ENCODE measurements at regions of chr1 and their contacts with region 1.

Region 1: DNA sequence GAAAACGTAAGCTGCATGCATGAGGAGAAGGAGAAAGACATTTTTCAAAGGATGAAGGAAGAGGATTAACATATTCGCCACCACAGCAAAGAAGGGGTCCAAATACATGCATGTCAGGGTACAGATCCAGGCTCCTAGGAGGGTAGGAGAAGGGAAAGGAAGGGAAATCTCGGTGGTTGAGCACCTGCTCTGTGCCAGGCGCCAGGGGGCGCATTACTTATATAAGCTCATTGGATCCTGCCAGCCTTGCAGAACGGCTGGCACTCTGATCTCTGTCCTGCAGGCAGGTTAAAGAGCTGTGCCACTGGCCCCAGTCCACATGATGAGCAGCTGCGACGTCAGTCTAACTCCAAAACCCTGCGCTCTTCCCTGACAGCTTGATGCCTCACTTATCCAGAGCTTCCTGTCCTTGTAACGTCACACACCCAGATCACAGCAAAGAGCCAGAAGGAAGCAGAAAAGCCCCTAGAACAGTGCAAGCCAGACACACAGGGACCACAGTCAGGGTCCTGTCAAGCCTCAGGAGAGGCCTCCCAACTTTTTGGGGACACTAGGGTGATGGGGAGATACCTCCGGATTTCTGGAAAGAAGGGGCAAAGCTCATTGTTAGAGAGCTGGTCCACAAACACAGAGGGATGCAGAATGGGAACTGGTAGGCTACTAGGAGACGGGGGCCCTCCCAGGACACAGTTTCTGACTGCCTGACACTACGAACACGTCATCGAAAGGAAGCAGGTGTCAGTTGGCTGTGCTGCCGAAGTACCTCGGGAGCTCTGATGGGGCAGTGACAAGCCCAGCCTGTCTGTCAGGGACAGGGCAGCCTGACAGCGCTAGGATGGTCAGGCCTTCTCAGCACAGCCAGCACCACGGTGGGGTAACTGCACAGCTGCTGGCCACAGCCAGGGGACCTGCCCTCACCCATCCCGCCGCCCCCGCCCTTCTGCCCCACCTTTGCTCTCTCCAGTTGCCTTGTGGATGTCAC is 99.1 kb downstream of the BEND5 start:
- DNase-seq: peak in 16 of 35 experiments; percentile 2 to 36 (median 12)
- ATAC-seq: no peak
- H3K4me3 ChIP-seq: no peak overlapping the region
- H3K4me3 Mint-ChIP-seq: no peak overlapping the region
- H3K27ac ChIP-seq: no peak overlapping the region
- H3K27ac Mint-ChIP-seq: no peak overlapping the region
- H3K4me1 ChIP-seq: no peaks in the 10 kb centered on the region
- H3K4me1 Mint-ChIP-seq: no peaks in the 10 kb centered on the region
- H3K27me3 ChIP-seq: peaks cover 0 to 11% of the 10 kb centered on the region in 2 experiments
- H3K27me3 Mint-ChIP-seq: peaks cover 6 to 26% of the 10 kb centered on the region in 2 donors

Region 2: GRCh38 chr1:48039088-48040054 is 638.2 kb before region 1 on chr1:
- CTCF ChIA-PET with region 1: interaction called in 1 of 2 experiments, 10 read pairs
- POLR2A ChIA-PET with region 1: no interaction called
- DNase-seq: no peak
- ATAC-seq: no peak
- H3K4me3 ChIP-seq: no peak overlapping the region
- H3K4me3 Mint-ChIP-seq: no peak overlapping the region
- H3K27ac ChIP-seq: no peak overlapping the region
- H3K27ac Mint-ChIP-seq: no peak overlapping the region
- H3K4me1 ChIP-seq: no peaks in the 10 kb centered on the region
- H3K4me1 Mint-ChIP-seq: no peaks in the 10 kb centered on the region
- H3K27me3 ChIP-seq: peaks cover 0 to 25% of the 10 kb centered on the region in 2 experiments
- H3K27me3 Mint-ChIP-seq: peaks cover 10 to 24% of the 10 kb centered on the region in 2 donors

Region 3: GRCh38 chr1:48450505-48450904 is 227.1 kb before region 1 on chr1:
- CTCF ChIA-PET with region 1: no interaction called
- POLR2A ChIA-PET with region 1: no interaction called
- DNase-seq: no peak
- ATAC-seq: no peak
- H3K4me3 ChIP-seq: no peak overlapping the region
- H3K4me3 Mint-ChIP-seq: no peak overlapping the region
- H3K27ac ChIP-seq: no peak overlapping the region
- H3K27ac Mint-ChIP-seq: no peak overlapping the region
- H3K4me1 ChIP-seq: no peaks in the 10 kb centered on the region
- H3K4me1 Mint-ChIP-seq: no peaks in the 10 kb centered on the region
- H3K27me3 ChIP-seq: no peaks in the 10 kb centered on the region
- H3K27me3 Mint-ChIP-seq: no peaks in the 10 kb centered on the region

Region 4: DNA sequence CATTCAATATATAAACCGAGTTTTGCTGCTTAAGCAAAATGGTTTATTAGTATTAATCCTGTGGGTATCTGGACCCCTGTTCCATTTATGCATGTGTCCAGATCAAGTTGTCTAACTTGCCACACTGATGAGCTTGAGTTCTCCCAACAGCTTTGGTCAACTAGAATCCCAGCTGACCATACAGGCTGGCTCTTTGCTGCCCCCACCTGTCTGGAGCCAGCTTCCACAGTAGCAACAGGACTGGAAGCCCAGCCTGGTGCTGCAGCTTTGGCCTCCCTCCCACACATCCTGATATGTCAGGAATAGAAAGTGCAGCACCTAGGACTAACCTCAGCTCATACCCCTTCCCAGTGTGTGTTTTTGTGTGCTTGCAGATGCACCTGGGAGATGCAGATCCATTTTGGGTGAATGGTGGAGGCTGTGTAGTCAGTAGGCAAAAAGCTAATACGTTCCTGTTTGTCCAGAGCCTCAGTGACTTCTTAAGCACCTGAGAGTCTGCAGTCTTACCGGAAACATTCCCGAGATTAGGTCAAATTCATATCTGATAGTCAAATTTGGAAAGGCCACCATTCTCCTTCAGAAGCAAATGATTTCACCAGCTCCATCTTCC is 140.0 kb after region 1 on chr1:
- CTCF ChIA-PET with region 1: interaction called, 3 to 11 read pairs
- POLR2A ChIA-PET with region 1: no interaction called
- DNase-seq: peak in 3 of 35 experiments; percentile 1 to 6 (median 3)
- ATAC-seq: no peak
- H3K4me3 ChIP-seq: no peak overlapping the region
- H3K4me3 Mint-ChIP-seq: no peak overlapping the region
- H3K27ac ChIP-seq: no peak overlapping the region
- H3K27ac Mint-ChIP-seq: no peak overlapping the region
- H3K4me1 ChIP-seq: no peaks in the 10 kb centered on the region
- H3K4me1 Mint-ChIP-seq: no peaks in the 10 kb centered on the region
- H3K27me3 ChIP-seq: no peaks in the 10 kb centered on the region
- H3K27me3 Mint-ChIP-seq: peaks cover 4 to 14% of the 10 kb centered on the region in 2 donors